Right lobe of liver (tissue), 6 donors: ENCODE measurements at regions of chr2 and their contacts with region 1.

Region 1: DNA sequence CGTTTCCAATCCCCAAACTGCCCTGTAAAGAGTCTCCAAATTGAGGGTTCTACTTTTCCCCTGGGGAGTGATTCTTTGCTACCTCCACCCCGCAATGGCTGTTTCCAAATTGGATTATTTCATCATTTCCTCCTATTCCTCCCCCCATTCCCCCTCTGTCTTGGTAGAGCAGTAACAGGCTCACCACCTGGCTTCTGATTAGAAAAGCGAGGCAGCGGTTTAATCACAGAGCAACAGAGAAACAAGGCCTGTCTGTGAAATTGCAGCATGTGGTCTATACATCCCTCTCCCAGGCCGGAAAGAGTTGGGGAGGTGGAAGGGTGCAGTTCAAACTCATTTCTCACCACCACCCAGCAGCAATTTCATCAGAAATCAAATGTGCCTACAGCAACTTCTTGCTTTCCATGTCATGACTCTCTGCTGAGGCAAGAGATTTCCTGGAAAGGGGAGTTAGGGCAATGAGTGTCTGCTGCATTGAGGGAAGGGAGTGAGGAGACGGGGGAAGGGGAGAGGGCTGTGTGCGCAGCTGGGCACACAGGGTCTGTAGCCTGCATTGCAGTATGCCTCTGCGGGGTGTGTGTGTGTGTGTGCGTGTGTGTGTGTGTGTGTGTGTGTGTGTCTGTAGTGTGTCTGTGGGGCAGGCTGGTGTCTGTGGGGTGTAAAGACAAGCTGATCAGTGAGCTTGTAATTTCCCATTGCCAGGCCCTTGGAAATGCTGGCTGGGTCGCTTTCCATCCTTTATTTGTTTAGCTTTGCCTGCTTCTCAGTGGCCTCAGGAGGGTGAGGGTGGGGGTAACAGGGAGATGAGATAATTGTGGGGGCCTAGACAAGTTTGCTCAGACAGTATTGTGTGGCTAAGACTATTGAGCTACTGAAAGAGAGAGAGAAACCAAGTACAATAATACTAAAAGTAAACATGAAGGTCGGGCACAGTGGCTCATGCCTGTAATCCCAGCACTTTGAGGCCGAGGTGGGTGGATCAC is 13.5 kb upstream of the IGFBP2 start:
- DNase-seq: no peak
- ATAC-seq: peak in 2 of 4 donors; percentile 4 to 19
- H3K4me3 ChIP-seq: no peak overlapping the region
- H3K27ac ChIP-seq: peak overlapping the region in 1 of 3 donors; percentile 70
- H3K4me1 ChIP-seq: peaks cover 0 to 46% (median 10%) of the 10 kb centered on the region in 4 donors
- H3K27me3 ChIP-seq: no peaks in the 10 kb centered on the region
- CTCF ChIP-seq: no peak
- POLR2A ChIP-seq: no peak

Region 2: GRCh38 chr2:216114714-216115557 is 504.8 kb before region 1 on chr2:
- intact Hi-C with region 1: no loop called
- DNase-seq: peak; percentile 97 to 99 (median 98)
- ATAC-seq: peak; percentile 92 to 94 (median 92)
- H3K4me3 ChIP-seq: peak overlapping the region; percentile 38 to 50 (median 46)
- H3K27ac ChIP-seq: peak overlapping the region; percentile 79 to 88 (median 84)
- H3K4me1 ChIP-seq: peaks cover 0 to 40% (median 13%) of the 10 kb centered on the region in 4 donors
- H3K27me3 ChIP-seq: no peaks in the 10 kb centered on the region
- CTCF ChIP-seq: peak; percentile 87 to 92 (median 88)
- POLR2A ChIP-seq: peak; percentile 28

Region 3: GRCh38 chr2:216436383-216436782 is 183.3 kb before region 1 on chr2:
- intact Hi-C with region 1: no loop called
- DNase-seq: no peak
- ATAC-seq: no peak
- H3K4me3 ChIP-seq: no peak overlapping the region
- H3K27ac ChIP-seq: no peak overlapping the region
- H3K4me1 ChIP-seq: no peaks in the 10 kb centered on the region
- H3K27me3 ChIP-seq: no peaks in the 10 kb centered on the region
- CTCF ChIP-seq: no peak
- POLR2A ChIP-seq: no peak

Region 4: DNA sequence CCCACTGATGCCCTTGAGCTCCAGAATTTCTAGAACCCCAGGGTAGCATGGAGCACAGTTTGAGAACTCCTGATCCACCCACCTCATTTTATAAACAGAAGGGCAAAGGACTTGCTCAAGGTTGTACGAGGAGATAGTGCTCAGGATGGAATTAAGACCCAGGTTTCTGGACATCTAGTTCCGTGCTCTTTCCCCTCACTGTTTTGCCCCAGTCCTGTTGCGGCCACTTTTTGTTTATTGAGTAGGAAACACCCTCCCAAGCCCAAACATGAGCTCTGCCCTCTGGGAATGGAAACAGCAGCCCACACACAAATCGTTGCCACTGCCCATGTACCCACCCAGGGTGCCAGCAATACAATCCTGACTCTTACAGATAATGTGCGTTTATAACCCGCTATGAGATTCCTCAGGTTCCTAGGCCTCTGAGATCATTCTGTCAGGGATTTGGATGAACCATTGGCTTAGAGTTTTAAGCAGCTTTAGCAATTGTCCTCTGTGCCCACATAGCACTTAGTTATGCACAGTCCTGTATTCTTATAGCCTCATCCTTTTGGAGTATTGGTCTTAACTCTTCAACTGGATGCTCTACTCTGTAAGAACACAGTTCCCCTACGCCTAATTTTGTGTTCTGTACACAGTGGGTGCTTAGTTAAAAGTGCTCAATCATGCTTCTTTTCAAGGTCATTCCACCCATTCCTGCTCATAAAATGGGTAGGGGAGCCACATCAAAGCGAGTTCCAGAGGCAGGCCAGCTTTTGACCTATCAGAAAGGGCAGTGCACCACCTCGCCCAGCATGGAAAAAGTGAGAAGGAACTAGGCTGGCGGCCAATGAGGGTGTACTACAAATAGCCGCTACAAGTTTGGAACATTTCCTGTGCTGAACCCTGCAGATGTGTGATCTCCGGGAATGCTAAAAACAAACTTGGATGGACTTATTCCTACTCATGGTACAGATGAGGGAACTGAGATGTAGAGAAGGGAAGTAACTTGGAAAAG is 46.8 kb before region 1 on chr2:
- intact Hi-C with region 1: loop called in 1 of 2 experiments (anchors 5 kb)
- DNase-seq: peak; percentile 87 to 96 (median 93)
- ATAC-seq: peak; percentile 72 to 85 (median 80)
- H3K4me3 ChIP-seq: peak overlapping the region in 1 of 3 donors; percentile 0
- H3K27ac ChIP-seq: peak overlapping the region; percentile 70 to 95 (median 89)
- H3K4me1 ChIP-seq: peaks cover 0 to 51% (median 14%) of the 10 kb centered on the region in 4 donors
- H3K27me3 ChIP-seq: no peaks in the 10 kb centered on the region
- CTCF ChIP-seq: no peak
- POLR2A ChIP-seq: peak; percentile 51